Ascending aorta (tissue), 2 donors: ENCODE measurements at regions of chr18 and their contacts with region 1.

Region 1: DNA sequence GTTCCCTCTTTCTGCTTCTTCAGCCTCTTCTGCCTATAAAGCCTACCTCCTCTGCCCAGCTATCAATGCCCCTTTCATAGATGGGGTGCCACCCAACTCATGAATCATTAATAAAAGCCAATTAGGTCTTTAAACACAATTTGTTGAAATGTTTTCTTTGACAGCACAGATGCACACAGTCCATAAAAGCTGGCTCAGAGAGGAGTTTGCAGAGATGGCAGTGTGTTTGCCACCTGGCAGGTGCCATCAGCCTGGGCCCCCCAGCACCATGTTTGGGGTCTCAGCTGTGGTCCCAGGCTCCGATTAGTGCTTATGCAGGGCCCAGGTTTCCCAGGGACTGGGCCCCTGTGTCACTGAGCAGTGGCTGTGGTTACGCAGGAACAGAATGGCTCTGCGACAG is 7.9 kb upstream of the MC2R start:
- DNase-seq: no peak
- H3K4me3 ChIP-seq: no peak overlapping the region
- H3K27ac ChIP-seq: no peak overlapping the region
- H3K4me1 ChIP-seq: no peaks in the 10 kb centered on the region
- H3K27me3 ChIP-seq: no peaks in the 10 kb centered on the region
- CTCF ChIP-seq: no peak

Region 2: GRCh38 chr18:13871701-13872100 is 51.5 kb before region 1 on chr18:
- intact Hi-C with region 1: loop called (anchors 10 kb)
- DNase-seq: no peak
- H3K4me3 ChIP-seq: no peak overlapping the region
- H3K27ac ChIP-seq: no peak overlapping the region
- H3K4me1 ChIP-seq: no peaks in the 10 kb centered on the region
- H3K27me3 ChIP-seq: no peaks in the 10 kb centered on the region
- CTCF ChIP-seq: no peak